Left ventricle myocardium inferior (tissue), 1 donor: ENCODE measurements at regions of chr7 and their contacts with region 1.

Region 1: DNA sequence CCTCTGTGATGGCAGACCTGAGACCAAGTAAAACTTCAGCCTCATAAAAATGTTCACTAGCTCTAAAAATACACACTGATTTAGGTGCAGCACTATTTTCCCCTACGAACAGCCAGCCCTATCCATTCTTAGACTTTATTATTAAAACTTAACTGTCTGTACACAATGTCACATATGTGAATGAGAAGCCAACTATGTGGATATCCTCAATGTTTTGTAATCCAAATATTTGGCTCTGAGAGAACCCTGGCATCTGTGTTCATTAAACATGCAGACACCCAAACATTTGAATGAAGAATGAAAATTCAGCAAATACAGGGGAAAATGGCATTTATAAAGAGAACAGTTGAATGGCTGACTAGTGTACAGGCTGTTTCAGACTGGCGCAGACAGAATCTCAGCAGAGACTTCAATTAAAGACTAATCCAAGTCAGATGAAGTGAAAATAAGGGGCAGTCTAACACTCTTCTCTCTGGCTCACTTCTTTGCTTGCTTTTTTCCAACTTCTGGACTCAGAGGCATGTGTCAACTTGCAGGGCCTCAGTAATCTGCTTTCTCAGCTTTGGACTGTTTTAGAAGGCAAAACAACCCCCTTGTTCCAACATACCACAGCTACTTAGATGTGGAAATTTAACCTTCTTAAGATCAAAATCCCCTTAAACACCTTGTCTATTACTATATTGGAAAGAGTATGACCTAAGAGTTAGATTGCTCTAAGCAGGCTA is 47.4 kb upstream of the FAM180A start:
- DNase-seq: no peak
- H3K4me3 ChIP-seq: no peak overlapping the region
- H3K27ac ChIP-seq: no peak overlapping the region
- H3K4me1 ChIP-seq: peaks cover 24% of the 10 kb centered on the region
- H3K27me3 ChIP-seq: no peaks in the 10 kb centered on the region
- CTCF ChIP-seq: no peak

Region 2: GRCh38 chr7:135672560-135673359 is 123.2 kb before region 1 on chr7:
- intact Hi-C with region 1: loop called (anchors 10 kb)
- DNase-seq: no peak
- H3K4me3 ChIP-seq: no peak overlapping the region
- H3K27ac ChIP-seq: peak overlapping the region; percentile 44
- H3K4me1 ChIP-seq: peaks cover 86% of the 10 kb centered on the region
- H3K27me3 ChIP-seq: no peaks in the 10 kb centered on the region
- CTCF ChIP-seq: peak; percentile 84

Region 3: GRCh38 chr7:137110091-137110509 is 1314.1 kb after region 1 on chr7:
- intact Hi-C with region 1: loop called (anchors 10 kb)
- DNase-seq: no peak
- H3K4me3 ChIP-seq: no peak overlapping the region
- H3K27ac ChIP-seq: no peak overlapping the region
- H3K4me1 ChIP-seq: no peaks in the 10 kb centered on the region
- H3K27me3 ChIP-seq: no peaks in the 10 kb centered on the region
- CTCF ChIP-seq: no peak